Naive thymus-derived CD4-positive, alpha-beta T cell (primary cell): ENCODE measurements at regions of chr3 and their contacts with region 1.

Region 1: GRCh38 chr3:108835101-108835500 is 12.5 kb downstream of the TRAT1 start:
- DNase-seq: peak in 7 of 9 donors; percentile 60 to 85 (median 75)
- ATAC-seq: peak; percentile 94
- H3K4me3 ChIP-seq: peak overlapping the region; percentile 43
- H3K4me3 Mint-ChIP-seq: peak overlapping the region; percentile 85 to 100 (median 92)
- H3K27ac ChIP-seq: peak overlapping the region; percentile 78
- H3K27ac Mint-ChIP-seq: peak overlapping the region; percentile 83 to 100 (median 94)
- H3K4me1 ChIP-seq: peaks cover 69% of the 10 kb centered on the region in 2 donors
- H3K4me1 Mint-ChIP-seq: peaks cover 42 to 96% (median 88%) of the 10 kb centered on the region in 7 donors
- H3K27me3 ChIP-seq: no peaks in the 10 kb centered on the region
- H3K27me3 Mint-ChIP-seq: no peaks in the 10 kb centered on the region

Region 2: GRCh38 chr3:107531917-107532469 is 1303.1 kb before region 1 on chr3:
- CTCF ChIA-PET with region 1: no interaction called
- POLR2A ChIA-PET with region 1: no interaction called
- intact Hi-C with region 1: loop called in 1 of 2 experiments (anchors 5 kb)
- DNase-seq: no peak
- ATAC-seq: no peak
- H3K4me3 ChIP-seq: no peak overlapping the region
- H3K4me3 Mint-ChIP-seq: no peak overlapping the region
- H3K27ac ChIP-seq: no peak overlapping the region
- H3K27ac Mint-ChIP-seq: peak overlapping the region in 1 of 9 donors; percentile 27
- H3K4me1 ChIP-seq: no peaks in the 10 kb centered on the region
- H3K4me1 Mint-ChIP-seq: peaks cover 6 to 76% (median 52%) of the 10 kb centered on the region in 7 donors
- H3K27me3 ChIP-seq: no peaks in the 10 kb centered on the region
- H3K27me3 Mint-ChIP-seq: peaks cover 0 to under 1% (median 0%) of the 10 kb centered on the region in 5 donors

Region 3: GRCh38 chr3:107740992-107741896 is 1093.9 kb before region 1 on chr3:
- CTCF ChIA-PET with region 1: no interaction called
- POLR2A ChIA-PET with region 1: no interaction called
- intact Hi-C with region 1: no loop called
- DNase-seq: peak in 6 of 9 donors; percentile 3 to 42 (median 22)
- ATAC-seq: no peak
- H3K4me3 ChIP-seq: no peak overlapping the region
- H3K4me3 Mint-ChIP-seq: no peak overlapping the region
- H3K27ac ChIP-seq: no peak overlapping the region
- H3K27ac Mint-ChIP-seq: no peak overlapping the region
- H3K4me1 ChIP-seq: no peaks in the 10 kb centered on the region
- H3K4me1 Mint-ChIP-seq: peaks cover 0 to 12% (median 0%) of the 10 kb centered on the region in 7 donors
- H3K27me3 ChIP-seq: no peaks in the 10 kb centered on the region
- H3K27me3 Mint-ChIP-seq: no peaks in the 10 kb centered on the region

Region 4: DNA sequence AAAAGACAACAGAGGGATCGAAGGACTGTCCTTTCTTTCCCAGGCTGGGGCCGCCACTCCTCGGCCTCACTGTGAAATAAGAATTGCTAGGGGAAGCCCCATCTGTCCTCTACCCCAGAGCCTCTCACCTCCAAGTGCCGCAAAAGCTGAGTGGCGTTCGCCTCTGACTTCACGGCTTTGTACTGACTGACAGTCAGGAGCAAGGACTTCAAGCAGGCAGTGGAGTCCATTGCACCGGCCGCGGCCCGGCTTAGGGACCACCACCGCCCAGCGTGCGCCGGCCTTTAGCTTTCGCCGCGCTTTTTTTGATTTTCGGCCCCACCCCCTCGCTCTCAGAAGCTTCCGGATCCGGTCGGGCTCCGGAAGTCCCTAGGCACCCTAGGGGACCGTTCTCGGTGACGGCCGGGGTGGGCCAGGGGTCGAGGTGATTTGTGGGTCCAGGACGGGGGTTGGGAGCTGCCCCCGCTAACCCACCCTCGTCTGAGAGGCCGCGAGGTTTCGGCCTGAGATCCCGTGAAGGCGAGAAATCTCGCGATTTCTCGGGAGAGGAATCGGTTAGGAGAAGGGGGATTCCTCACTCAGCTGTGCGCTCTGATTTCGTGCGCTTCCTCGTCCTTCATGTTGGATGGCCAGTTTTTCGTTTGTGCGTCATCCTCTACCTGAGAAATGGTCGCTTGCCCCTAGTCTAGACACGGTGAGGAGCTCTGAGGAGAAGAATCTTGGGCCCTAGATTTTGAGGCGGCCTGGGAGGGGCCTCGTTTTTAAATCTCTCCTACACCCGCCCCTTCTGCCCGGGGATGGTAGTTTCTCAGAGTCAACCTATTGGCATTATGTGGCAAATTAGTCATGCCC is 245.7 kb before region 1 on chr3 and contains the starts of genes CIP2A and DZIP3:
- CTCF ChIA-PET with region 1: interaction called, 4 read pairs
- POLR2A ChIA-PET with region 1: interaction called, 7 read pairs
- intact Hi-C with region 1: loop called in 1 of 2 experiments (anchors 5 kb)
- DNase-seq: peak; percentile 74 to 88 (median 82)
- ATAC-seq: peak; percentile 83
- H3K4me3 ChIP-seq: peak within 1 kb of the TSS; percentile 87
- H3K4me3 Mint-ChIP-seq: peak within 1 kb of the TSS; percentile 94 to 99 (median 98)
- H3K27ac ChIP-seq: peak within 1 kb of the TSS; percentile 92
- H3K27ac Mint-ChIP-seq: peak within 1 kb of the TSS; percentile 95 to 100 (median 99)
- H3K4me1 ChIP-seq: peaks cover 11 to 15% of the 10 kb centered on the region in 2 donors
- H3K4me1 Mint-ChIP-seq: peaks cover 12 to 53% (median 39%) of the 10 kb centered on the region in 7 donors
- H3K27me3 ChIP-seq: no peaks in the 10 kb centered on the region
- H3K27me3 Mint-ChIP-seq: no peaks in the 10 kb centered on the region
- total RNA-seq, gene CIP2A: 3.4 to 44.2 (median 4.1) TPM
- total RNA-seq, gene DZIP3: 9.6 to 17.3 (median 14.6) TPM

Region 5: DNA sequence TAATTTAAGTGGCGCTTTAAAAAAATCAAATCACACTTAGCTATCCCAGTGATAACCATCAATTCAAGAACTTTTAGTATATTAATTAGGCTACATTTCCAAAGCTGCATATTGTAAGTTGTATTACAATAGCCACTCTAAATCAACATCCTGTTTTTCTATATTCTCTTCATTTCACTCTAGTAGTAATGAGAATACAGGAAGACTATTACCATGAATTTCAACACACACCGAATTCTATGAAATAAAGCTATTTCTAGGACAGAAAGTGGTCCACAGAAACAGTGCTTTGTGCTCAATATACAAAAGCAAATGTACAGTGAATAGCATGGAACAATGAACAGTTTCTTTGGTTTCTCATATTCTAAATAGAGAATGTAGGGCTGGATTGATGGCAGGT is 12.1 kb after region 1 on chr3:
- CTCF ChIA-PET with region 1: interaction called, 5 read pairs
- POLR2A ChIA-PET with region 1: interaction called, 8 read pairs
- intact Hi-C with region 1: loop called (anchors 1 kb)
- DNase-seq: no peak
- ATAC-seq: no peak
- H3K4me3 ChIP-seq: no peak overlapping the region
- H3K4me3 Mint-ChIP-seq: peak overlapping the region in 9 of 10 donors; percentile 12 to 77 (median 54)
- H3K27ac ChIP-seq: peak overlapping the region; percentile 54
- H3K27ac Mint-ChIP-seq: peak overlapping the region; percentile 20 to 93 (median 74)
- H3K4me1 ChIP-seq: peaks cover 16 to 55% of the 10 kb centered on the region in 2 donors
- H3K4me1 Mint-ChIP-seq: peaks cover 39 to 84% (median 74%) of the 10 kb centered on the region in 7 donors
- H3K27me3 ChIP-seq: no peaks in the 10 kb centered on the region
- H3K27me3 Mint-ChIP-seq: no peaks in the 10 kb centered on the region

Region 6: DNA sequence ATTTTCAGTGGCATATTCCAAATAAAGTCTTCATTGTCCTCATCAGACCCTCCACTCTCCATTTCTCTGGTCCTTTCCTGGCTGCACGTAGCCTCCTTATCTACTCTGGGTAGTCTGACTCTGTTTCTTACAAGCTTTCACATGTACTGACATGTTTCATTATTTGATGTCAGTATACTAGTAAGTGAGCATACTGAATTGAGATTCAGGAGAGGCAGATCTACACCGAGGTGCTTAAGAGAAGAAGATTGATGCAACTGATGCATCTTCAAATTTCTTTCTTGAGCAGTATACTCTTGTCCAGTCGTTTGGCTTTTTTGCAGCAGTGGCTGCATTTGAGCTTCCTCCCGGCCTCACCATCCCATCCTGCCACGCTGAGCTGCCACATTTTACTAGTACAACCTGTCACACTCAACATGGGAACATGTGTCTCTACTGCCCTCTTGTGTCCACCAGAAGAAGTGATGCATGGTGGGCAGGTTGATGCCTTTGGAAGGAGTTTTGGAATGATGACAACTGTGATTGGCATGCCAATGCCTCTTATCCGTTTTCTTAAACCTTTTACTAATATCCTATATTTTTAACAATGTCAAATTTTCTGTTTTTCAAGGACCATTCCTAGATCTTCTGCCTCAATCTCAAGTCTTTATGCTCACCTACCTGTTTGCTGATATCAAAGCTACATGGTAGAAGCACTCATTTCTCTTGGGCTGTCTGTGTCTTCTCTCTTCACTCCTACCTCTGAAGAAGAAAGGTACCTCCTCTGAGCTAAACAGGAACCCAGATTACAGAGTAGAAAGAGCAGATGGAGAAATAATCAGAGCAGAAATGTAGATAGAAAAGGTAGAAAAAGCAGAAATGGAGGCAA is 79.9 kb after region 1 on chr3:
- CTCF ChIA-PET with region 1: interaction called, 3 read pairs
- POLR2A ChIA-PET with region 1: interaction called, 4 read pairs
- intact Hi-C with region 1: loop called in 1 of 2 experiments (anchors 5 kb)
- DNase-seq: peak; percentile 17 to 82 (median 71)
- ATAC-seq: peak; percentile 94
- H3K4me3 ChIP-seq: no peak overlapping the region
- H3K4me3 Mint-ChIP-seq: peak overlapping the region; percentile 43 to 72 (median 66)
- H3K27ac ChIP-seq: no peak overlapping the region
- H3K27ac Mint-ChIP-seq: peak overlapping the region in 6 of 9 donors; percentile 11 to 60 (median 32)
- H3K4me1 ChIP-seq: peaks cover 5 to 9% of the 10 kb centered on the region in 2 donors
- H3K4me1 Mint-ChIP-seq: peaks cover 12 to 21% (median 18%) of the 10 kb centered on the region in 7 donors
- H3K27me3 ChIP-seq: no peaks in the 10 kb centered on the region
- H3K27me3 Mint-ChIP-seq: peaks cover 0 to 33% (median 0%) of the 10 kb centered on the region in 5 donors